T-cell (primary cell): ENCODE measurements at regions of chr5 and their contacts with region 1.

Region 1: GRCh38 chr5:90409318-90410177 is at the start of gene CETN3:
- DNase-seq: peak; percentile 76 to 95 (median 85)
- ATAC-seq: peak; percentile 93 to 95 (median 94)
- H3K4me3 ChIP-seq: peak within 1 kb of the TSS; percentile 97 to 98
- H3K4me3 Mint-ChIP-seq: no peak within 1 kb of the TSS
- H3K27ac ChIP-seq: peak within 1 kb of the TSS; percentile 95
- H3K27ac Mint-ChIP-seq: no peak within 1 kb of the TSS
- H3K4me1 ChIP-seq: peaks cover 7 to 14% of the 10 kb centered on the region in 2 experiments
- H3K4me1 Mint-ChIP-seq: peaks cover 18 to 22% (median 19%) of the 10 kb centered on the region in 3 donors
- H3K27me3 ChIP-seq: peaks cover 0 to 1% of the 10 kb centered on the region in 2 experiments
- H3K27me3 Mint-ChIP-seq: no peaks in the 10 kb centered on the region
- total RNA-seq, gene CETN3: 6.9 to 17.6 (median 15.8) TPM

Region 2: GRCh38 chr5:90398726-90399125 is 10.8 kb before region 1 on chr5:
- CTCF ChIA-PET with region 1: no interaction called
- POLR2A ChIA-PET with region 1: interaction called, 5 to 13 read pairs
- DNase-seq: no peak
- ATAC-seq: no peak
- H3K4me3 ChIP-seq: no peak overlapping the region
- H3K4me3 Mint-ChIP-seq: no peak overlapping the region
- H3K27ac ChIP-seq: no peak overlapping the region
- H3K27ac Mint-ChIP-seq: no peak overlapping the region
- H3K4me1 ChIP-seq: no peaks in the 10 kb centered on the region
- H3K4me1 Mint-ChIP-seq: peaks cover 8 to 17% (median 12%) of the 10 kb centered on the region in 3 donors
- H3K27me3 ChIP-seq: no peaks in the 10 kb centered on the region
- H3K27me3 Mint-ChIP-seq: no peaks in the 10 kb centered on the region

Region 3: DNA sequence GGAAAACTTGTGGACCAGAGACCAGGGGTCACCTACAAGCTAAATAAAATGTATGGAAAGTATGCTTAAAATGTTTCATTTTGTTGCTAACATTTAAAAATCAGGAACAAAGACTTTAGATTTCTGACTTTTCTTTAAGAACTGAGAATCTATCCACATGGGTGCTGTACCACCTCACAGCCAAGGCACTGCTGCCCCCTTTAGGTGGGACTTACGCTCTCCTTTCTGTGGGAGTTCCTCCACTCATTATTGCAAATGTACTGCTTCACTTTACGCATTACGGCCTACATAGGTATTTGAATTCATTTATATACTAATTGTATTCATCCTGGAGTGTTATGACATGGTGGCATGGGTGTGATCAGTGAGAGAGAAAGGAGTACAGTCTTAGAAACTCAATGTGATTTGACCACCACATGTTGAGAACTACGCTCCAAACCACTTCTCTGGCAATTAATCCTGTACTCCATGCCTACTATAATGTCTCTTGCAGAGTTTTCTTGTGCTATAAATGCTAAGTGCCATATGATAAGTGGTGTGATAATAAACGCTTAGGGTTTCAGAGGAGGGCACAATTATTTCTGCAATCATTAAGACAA is 24.7 kb after region 1 on chr5:
- CTCF ChIA-PET with region 1: interaction called, 6 to 32 read pairs
- POLR2A ChIA-PET with region 1: interaction called in 1 of 2 experiments, 4 read pairs
- DNase-seq: peak in 32 of 35 experiments; percentile 7 to 63 (median 26)
- ATAC-seq: peak in 3 of 4 experiments; percentile 35 to 65 (median 54)
- H3K4me3 ChIP-seq: no peak overlapping the region
- H3K4me3 Mint-ChIP-seq: no peak overlapping the region
- H3K27ac ChIP-seq: no peak overlapping the region
- H3K27ac Mint-ChIP-seq: no peak overlapping the region
- H3K4me1 ChIP-seq: no peaks in the 10 kb centered on the region
- H3K4me1 Mint-ChIP-seq: no peaks in the 10 kb centered on the region
- H3K27me3 ChIP-seq: no peaks in the 10 kb centered on the region
- H3K27me3 Mint-ChIP-seq: peaks cover 0 to 7% of the 10 kb centered on the region in 2 donors

Region 4: GRCh38 chr5:90474235-90475109 is 64.9 kb after region 1 on chr5 and contains the starts of genes MBLAC2 and POLR3G:
- CTCF ChIA-PET with region 1: interaction called in 1 of 2 experiments, 17 read pairs
- POLR2A ChIA-PET with region 1: interaction called, 6 to 7 read pairs
- DNase-seq: peak; percentile 82 to 94 (median 90)
- ATAC-seq: peak; percentile 87 to 93 (median 89)
- H3K4me3 ChIP-seq: peak within 1 kb of the TSS; percentile 88 to 96
- H3K4me3 Mint-ChIP-seq: peak within 1 kb of the TSS; percentile 94 to 98 (median 96)
- H3K27ac ChIP-seq: peak within 1 kb of the TSS; percentile 57
- H3K27ac Mint-ChIP-seq: peak within 1 kb of the TSS; percentile 95 to 96
- H3K4me1 ChIP-seq: peaks cover 11 to 15% of the 10 kb centered on the region in 2 experiments
- H3K4me1 Mint-ChIP-seq: peaks cover 36 to 48% (median 43%) of the 10 kb centered on the region in 3 donors
- H3K27me3 ChIP-seq: no peaks in the 10 kb centered on the region
- H3K27me3 Mint-ChIP-seq: no peaks in the 10 kb centered on the region
- total RNA-seq, gene MBLAC2: 6.0 to 13.0 (median 9.8) TPM
- total RNA-seq, gene POLR3G: 0.84 to 2.3 (median 1.6) TPM

Region 5: DNA sequence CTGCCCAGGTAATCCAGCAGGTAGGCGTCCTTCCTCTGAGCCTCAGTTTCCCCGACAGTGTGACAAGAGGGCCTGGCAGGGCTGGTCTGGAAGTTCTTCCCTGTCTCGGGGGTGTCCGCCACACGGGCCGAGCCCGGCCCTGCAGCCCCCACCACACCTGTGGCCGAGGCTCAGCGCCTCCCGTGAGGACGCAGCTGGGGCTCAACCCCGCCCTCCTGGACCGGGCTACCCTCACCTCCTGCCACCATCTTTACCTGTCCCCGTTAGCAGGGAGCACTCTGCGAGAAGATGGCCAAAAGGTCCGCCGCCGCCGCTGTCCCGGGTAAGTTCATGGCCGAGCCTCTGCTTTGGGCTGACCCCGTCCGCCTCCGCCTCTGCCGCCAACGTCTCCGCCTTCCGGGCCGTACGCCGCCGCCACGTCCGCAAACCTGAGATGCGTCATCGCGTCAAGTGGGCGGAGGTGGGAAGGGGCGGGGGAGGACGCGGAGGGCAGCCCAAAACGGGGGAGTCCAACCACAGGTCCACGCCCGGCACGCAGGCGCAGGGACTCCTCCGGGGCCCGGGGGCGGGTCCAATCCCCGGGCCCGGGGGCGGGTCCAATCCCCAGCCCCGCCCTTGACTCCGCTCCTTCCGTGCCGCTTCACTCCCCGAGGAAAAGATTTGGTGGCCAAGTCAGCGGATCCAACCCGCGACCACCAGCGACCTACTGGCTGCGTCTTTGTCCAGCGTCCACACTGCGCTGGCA is 119.8 kb after region 1 on chr5 and contains the start of gene LYSMD3:
- CTCF ChIA-PET with region 1: interaction called, 3 to 12 read pairs
- POLR2A ChIA-PET with region 1: interaction called, 5 to 21 read pairs
- DNase-seq: peak; percentile 94 to 98 (median 97)
- ATAC-seq: peak; percentile 89 to 97 (median 92)
- H3K4me3 ChIP-seq: peak within 1 kb of the TSS; percentile 97
- H3K4me3 Mint-ChIP-seq: peak within 1 kb of the TSS; percentile 95 to 100 (median 99)
- H3K27ac ChIP-seq: peak within 1 kb of the TSS; percentile 97
- H3K27ac Mint-ChIP-seq: peak within 1 kb of the TSS; percentile 97 to 98
- H3K4me1 ChIP-seq: peaks cover 6 to 25% of the 10 kb centered on the region in 2 experiments
- H3K4me1 Mint-ChIP-seq: peaks cover 29 to 38% (median 34%) of the 10 kb centered on the region in 3 donors
- H3K27me3 ChIP-seq: peaks cover 0 to 3% of the 10 kb centered on the region in 2 experiments
- H3K27me3 Mint-ChIP-seq: peaks cover 15 to 20% of the 10 kb centered on the region in 2 donors
- total RNA-seq, gene LYSMD3: 18.4 to 28.9 (median 21.5) TPM

Region 6: GRCh38 chr5:90802474-90803317 is 393.1 kb after region 1 on chr5:
- CTCF ChIA-PET with region 1: no interaction called
- POLR2A ChIA-PET with region 1: no interaction called
- DNase-seq: peak in 2 of 35 experiments; percentile 3 to 18
- ATAC-seq: peak in 1 of 4 experiments; percentile 43
- H3K4me3 ChIP-seq: no peak overlapping the region
- H3K4me3 Mint-ChIP-seq: no peak overlapping the region
- H3K27ac ChIP-seq: no peak overlapping the region
- H3K27ac Mint-ChIP-seq: no peak overlapping the region
- H3K4me1 ChIP-seq: no peaks in the 10 kb centered on the region
- H3K4me1 Mint-ChIP-seq: no peaks in the 10 kb centered on the region
- H3K27me3 ChIP-seq: no peaks in the 10 kb centered on the region
- H3K27me3 Mint-ChIP-seq: peaks cover 0 to 4% of the 10 kb centered on the region in 2 donors